CD4-positive, alpha-beta T cell (primary cell): ENCODE measurements at regions of chr17 and their contacts with region 1.

Region 1: GRCh38 chr17:63848834-63849700 is 6.6 kb upstream of the SMARCD2 start:
- DNase-seq: peak; percentile 89 to 97 (median 94)
- ATAC-seq: peak; percentile 97
- H3K4me3 ChIP-seq: peak overlapping the region; percentile 36
- H3K4me3 Mint-ChIP-seq: peak overlapping the region; percentile 82
- H3K27ac ChIP-seq: peak overlapping the region in 1 of 2 donors; percentile 36
- H3K27ac Mint-ChIP-seq: peak overlapping the region; percentile 68
- H3K4me1 ChIP-seq: peaks cover 19% of the 10 kb centered on the region
- H3K4me1 Mint-ChIP-seq: peaks cover 16% of the 10 kb centered on the region
- H3K27me3 ChIP-seq: no peaks in the 10 kb centered on the region
- H3K27me3 Mint-ChIP-seq: no peaks in the 10 kb centered on the region
- CTCF ChIP-seq: peak; percentile 77

Region 2: GRCh38 chr17:63827002-63827771 is 21.9 kb before region 1 on chr17 and contains the starts of genes FTSJ3 and PSMC5:
- CTCF ChIA-PET with region 1: interaction called, 21 read pairs
- POLR2A ChIA-PET with region 1: interaction called, 25 read pairs
- intact Hi-C with region 1: no loop called
- DNase-seq: peak; percentile 91 to 98 (median 95)
- ATAC-seq: peak; percentile 93
- H3K4me3 ChIP-seq: peak within 1 kb of the TSS; percentile 83
- H3K4me3 Mint-ChIP-seq: peak within 1 kb of the TSS; percentile 94
- H3K27ac ChIP-seq: peak within 1 kb of the TSS; percentile 77 to 96
- H3K27ac Mint-ChIP-seq: peak within 1 kb of the TSS; percentile 96
- H3K4me1 ChIP-seq: peaks cover 69% of the 10 kb centered on the region
- H3K4me1 Mint-ChIP-seq: peaks cover 75% of the 10 kb centered on the region
- H3K27me3 ChIP-seq: no peaks in the 10 kb centered on the region
- H3K27me3 Mint-ChIP-seq: no peaks in the 10 kb centered on the region
- CTCF ChIP-seq: peak; percentile 65
- total RNA-seq, gene FTSJ3: 47.6 to 51.1 TPM
- total RNA-seq, gene PSMC5: 83.1 to 84.6 TPM

Region 3: DNA sequence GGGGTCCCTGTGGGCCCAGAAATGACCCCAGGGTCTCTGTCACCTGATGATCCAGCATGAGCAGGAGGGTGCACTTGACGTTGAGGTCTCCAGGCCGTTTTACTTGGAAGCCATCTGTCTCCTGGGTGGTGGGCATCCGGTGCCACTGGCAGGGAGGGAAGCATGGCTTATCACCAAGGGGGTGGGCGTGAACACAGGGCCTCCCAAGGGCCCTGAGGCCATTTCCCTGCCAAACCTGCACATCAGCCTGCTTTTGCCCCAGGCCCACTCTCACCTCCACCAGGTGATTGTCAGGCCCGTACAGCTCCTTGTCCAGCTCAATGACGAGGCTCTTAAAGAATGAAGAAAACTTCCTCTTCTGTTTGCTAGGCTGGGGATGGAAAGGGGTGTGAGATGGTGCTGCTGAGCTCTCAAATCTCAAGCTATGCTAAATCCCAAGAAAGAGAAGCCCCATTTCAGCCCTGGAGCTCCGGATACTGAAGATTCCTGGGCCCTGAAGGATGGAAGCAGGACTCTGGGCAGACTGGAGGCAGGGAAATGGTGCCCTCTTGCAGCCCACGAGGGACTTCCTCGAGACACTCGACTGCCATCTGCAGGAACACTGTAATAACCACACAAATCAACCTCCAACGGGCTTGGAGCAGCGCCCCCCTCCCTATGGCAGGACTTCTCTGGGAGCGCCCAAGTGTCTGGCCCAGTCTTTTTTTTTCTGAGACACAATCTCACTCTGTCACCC is 14.5 kb before region 1 on chr17:
- CTCF ChIA-PET with region 1: interaction called, 21 read pairs
- POLR2A ChIA-PET with region 1: interaction called, 14 read pairs
- intact Hi-C with region 1: no loop called
- DNase-seq: peak in 13 of 14 experiments; percentile 40 to 88 (median 55)
- ATAC-seq: peak; percentile 88
- H3K4me3 ChIP-seq: no peak overlapping the region
- H3K4me3 Mint-ChIP-seq: peak overlapping the region; percentile 65
- H3K27ac ChIP-seq: no peak overlapping the region
- H3K27ac Mint-ChIP-seq: peak overlapping the region; percentile 45
- H3K4me1 ChIP-seq: peaks cover 75% of the 10 kb centered on the region
- H3K4me1 Mint-ChIP-seq: peaks cover 61% of the 10 kb centered on the region
- H3K27me3 ChIP-seq: no peaks in the 10 kb centered on the region
- H3K27me3 Mint-ChIP-seq: no peaks in the 10 kb centered on the region
- CTCF ChIP-seq: peak; percentile 57

Region 4: GRCh38 chr17:63998050-63998720 is 149.1 kb after region 1 on chr17 and contains the start of gene PRR29:
- CTCF ChIA-PET with region 1: no interaction called
- POLR2A ChIA-PET with region 1: no interaction called
- intact Hi-C with region 1: no loop called
- DNase-seq: peak; percentile 56 to 90 (median 70)
- ATAC-seq: peak; percentile 70
- H3K4me3 ChIP-seq: peak within 1 kb of the TSS; percentile 80
- H3K4me3 Mint-ChIP-seq: peak within 1 kb of the TSS; percentile 91
- H3K27ac ChIP-seq: no peak within 1 kb of the TSS
- H3K27ac Mint-ChIP-seq: peak within 1 kb of the TSS; percentile 73
- H3K4me1 ChIP-seq: peaks cover 45% of the 10 kb centered on the region
- H3K4me1 Mint-ChIP-seq: peaks cover 58% of the 10 kb centered on the region
- H3K27me3 ChIP-seq: no peaks in the 10 kb centered on the region
- H3K27me3 Mint-ChIP-seq: no peaks in the 10 kb centered on the region
- CTCF ChIP-seq: no peak
- total RNA-seq, gene PRR29: 0.56 to 0.71 TPM